ENCODE measurements at regions of chr9 and their contacts with region 1.

Region 1: DNA sequence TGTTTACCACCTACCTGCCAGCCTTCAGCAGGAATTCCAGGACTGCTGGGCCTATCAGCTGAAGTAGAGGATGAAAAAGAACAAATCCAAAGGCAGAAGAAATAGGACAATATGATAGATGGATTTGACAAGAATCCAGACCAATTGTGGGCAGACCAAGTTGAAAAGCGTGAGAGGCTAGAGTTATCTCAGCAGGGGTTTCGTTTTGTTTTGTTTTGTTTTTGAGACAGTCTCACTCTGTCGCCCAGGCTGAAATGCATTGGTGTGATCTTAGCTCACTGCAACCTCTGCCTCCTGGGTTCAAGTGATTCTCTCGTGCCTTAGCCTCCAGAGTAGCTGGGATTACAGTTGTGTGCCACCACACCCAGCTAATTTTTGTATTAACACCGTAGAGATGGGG is 113.2 kb downstream of the PALM2AKAP2 start:
- DNase-seq: no peak
- H3K4me3 ChIP-seq: no peak overlapping the region
- H3K27ac ChIP-seq: no peak overlapping the region
- H3K4me1 ChIP-seq: no peaks in the 10 kb centered on the region
- H3K27me3 ChIP-seq: no peaks in the 10 kb centered on the region
- CTCF ChIP-seq: no peak

Region 2: GRCh38 chr9:110048403-110048975 is 155.2 kb after region 1 on chr9:
- CTCF ChIA-PET with region 1: no interaction called
- POLR2A ChIA-PET with region 1: interaction called, 22 read pairs
- intact Hi-C with region 1: no loop called
- DNase-seq: peak; percentile 80
- H3K4me3 ChIP-seq: peak overlapping the region; percentile 79
- H3K27ac ChIP-seq: no peak overlapping the region
- H3K4me1 ChIP-seq: no peaks in the 10 kb centered on the region
- H3K27me3 ChIP-seq: no peaks in the 10 kb centered on the region
- CTCF ChIP-seq: no peak